ENCODE measurements at regions of chr10 and their contacts with region 1.

Region 1: GRCh38 chr10:88064608-88065382 is 201.4 kb downstream of the PTEN start:
- DNase-seq: peak in 7 of 9 donors; percentile 72 to 93 (median 87)
- ATAC-seq: peak; percentile 92
- H3K4me3 ChIP-seq: no peak overlapping the region
- H3K4me3 Mint-ChIP-seq: peak overlapping the region; percentile 14 to 77 (median 66)
- H3K27ac ChIP-seq: peak overlapping the region; percentile 67
- H3K27ac Mint-ChIP-seq: peak overlapping the region; percentile 26 to 99 (median 95)
- H3K4me1 ChIP-seq: peaks cover 6 to 77% of the 10 kb centered on the region in 2 donors
- H3K4me1 Mint-ChIP-seq: peaks cover 0 to 83% (median 65%) of the 10 kb centered on the region in 7 donors
- H3K27me3 ChIP-seq: no peaks in the 10 kb centered on the region
- H3K27me3 Mint-ChIP-seq: peaks cover 0 to 4% (median 0%) of the 10 kb centered on the region in 5 donors

Region 2: GRCh38 chr10:88027570-88027969 is 37.2 kb before region 1 on chr10:
- CTCF ChIA-PET with region 1: no interaction called
- POLR2A ChIA-PET with region 1: no interaction called
- intact Hi-C with region 1: loop called in 1 of 2 experiments (anchors 2 kb)
- DNase-seq: no peak
- ATAC-seq: peak; percentile 75
- H3K4me3 ChIP-seq: no peak overlapping the region
- H3K4me3 Mint-ChIP-seq: no peak overlapping the region
- H3K27ac ChIP-seq: no peak overlapping the region
- H3K27ac Mint-ChIP-seq: peak overlapping the region in 7 of 9 donors; percentile 12 to 90 (median 76)
- H3K4me1 ChIP-seq: peaks cover 11 to 15% of the 10 kb centered on the region in 2 donors
- H3K4me1 Mint-ChIP-seq: peaks cover 10 to 31% (median 18%) of the 10 kb centered on the region in 7 donors
- H3K27me3 ChIP-seq: no peaks in the 10 kb centered on the region
- H3K27me3 Mint-ChIP-seq: no peaks in the 10 kb centered on the region

Region 3: GRCh38 chr10:88080213-88080612 is 15.4 kb after region 1 on chr10:
- CTCF ChIA-PET with region 1: interaction called, 3 read pairs
- POLR2A ChIA-PET with region 1: interaction called, 3 read pairs
- intact Hi-C with region 1: loop called in 1 of 2 experiments (anchors 2 kb)
- DNase-seq: no peak
- ATAC-seq: no peak
- H3K4me3 ChIP-seq: no peak overlapping the region
- H3K4me3 Mint-ChIP-seq: no peak overlapping the region
- H3K27ac ChIP-seq: no peak overlapping the region
- H3K27ac Mint-ChIP-seq: no peak overlapping the region
- H3K4me1 ChIP-seq: no peaks in the 10 kb centered on the region
- H3K4me1 Mint-ChIP-seq: peaks cover 0 to 18% (median 7%) of the 10 kb centered on the region in 7 donors
- H3K27me3 ChIP-seq: no peaks in the 10 kb centered on the region
- H3K27me3 Mint-ChIP-seq: peaks cover 0 to 47% (median 0%) of the 10 kb centered on the region in 5 donors

Region 4: GRCh38 chr10:88114368-88114767 is 49.6 kb after region 1 on chr10:
- CTCF ChIA-PET with region 1: no interaction called
- POLR2A ChIA-PET with region 1: no interaction called
- intact Hi-C with region 1: loop called in 1 of 2 experiments (anchors 1 kb)
- DNase-seq: peak in 5 of 9 donors; percentile 11 to 48 (median 37)
- ATAC-seq: peak; percentile 74
- H3K4me3 ChIP-seq: no peak overlapping the region
- H3K4me3 Mint-ChIP-seq: peak overlapping the region in 5 of 10 donors; percentile 3 to 52 (median 32)
- H3K27ac ChIP-seq: no peak overlapping the region
- H3K27ac Mint-ChIP-seq: no peak overlapping the region
- H3K4me1 ChIP-seq: peaks cover 11 to 26% of the 10 kb centered on the region in 2 donors
- H3K4me1 Mint-ChIP-seq: peaks cover 4 to 32% (median 15%) of the 10 kb centered on the region in 7 donors
- H3K27me3 ChIP-seq: no peaks in the 10 kb centered on the region
- H3K27me3 Mint-ChIP-seq: peaks cover 0 to 12% (median 0%) of the 10 kb centered on the region in 5 donors

Region 5: GRCh38 chr10:88131511-88132154 is 66.8 kb after region 1 on chr10:
- CTCF ChIA-PET with region 1: no interaction called
- POLR2A ChIA-PET with region 1: no interaction called
- intact Hi-C with region 1: no loop called
- DNase-seq: no peak
- ATAC-seq: no peak
- H3K4me3 ChIP-seq: no peak overlapping the region
- H3K4me3 Mint-ChIP-seq: no peak overlapping the region
- H3K27ac ChIP-seq: no peak overlapping the region
- H3K27ac Mint-ChIP-seq: no peak overlapping the region
- H3K4me1 ChIP-seq: no peaks in the 10 kb centered on the region
- H3K4me1 Mint-ChIP-seq: peaks cover 0 to under 1% (median 0%) of the 10 kb centered on the region in 7 donors
- H3K27me3 ChIP-seq: no peaks in the 10 kb centered on the region
- H3K27me3 Mint-ChIP-seq: peaks cover 0 to 14% (median 0%) of the 10 kb centered on the region in 5 donors

Region 6: GRCh38 chr10:88194041-88194887 is 129.5 kb after region 1 on chr10:
- CTCF ChIA-PET with region 1: no interaction called
- POLR2A ChIA-PET with region 1: no interaction called
- intact Hi-C with region 1: loop called in 1 of 2 experiments (anchors 5 kb)
- DNase-seq: peak in 8 of 9 donors; percentile 24 to 83 (median 72)
- ATAC-seq: peak; percentile 98
- H3K4me3 ChIP-seq: peak overlapping the region; percentile 9
- H3K4me3 Mint-ChIP-seq: peak overlapping the region; percentile 61 to 80 (median 72)
- H3K27ac ChIP-seq: peak overlapping the region; percentile 53
- H3K27ac Mint-ChIP-seq: peak overlapping the region; percentile 72 to 94 (median 89)
- H3K4me1 ChIP-seq: peaks cover 32% of the 10 kb centered on the region in 2 donors
- H3K4me1 Mint-ChIP-seq: peaks cover 21 to 71% (median 52%) of the 10 kb centered on the region in 7 donors
- H3K27me3 ChIP-seq: no peaks in the 10 kb centered on the region
- H3K27me3 Mint-ChIP-seq: peaks cover 0 to 2% (median 0%) of the 10 kb centered on the region in 5 donors

Region 7: DNA sequence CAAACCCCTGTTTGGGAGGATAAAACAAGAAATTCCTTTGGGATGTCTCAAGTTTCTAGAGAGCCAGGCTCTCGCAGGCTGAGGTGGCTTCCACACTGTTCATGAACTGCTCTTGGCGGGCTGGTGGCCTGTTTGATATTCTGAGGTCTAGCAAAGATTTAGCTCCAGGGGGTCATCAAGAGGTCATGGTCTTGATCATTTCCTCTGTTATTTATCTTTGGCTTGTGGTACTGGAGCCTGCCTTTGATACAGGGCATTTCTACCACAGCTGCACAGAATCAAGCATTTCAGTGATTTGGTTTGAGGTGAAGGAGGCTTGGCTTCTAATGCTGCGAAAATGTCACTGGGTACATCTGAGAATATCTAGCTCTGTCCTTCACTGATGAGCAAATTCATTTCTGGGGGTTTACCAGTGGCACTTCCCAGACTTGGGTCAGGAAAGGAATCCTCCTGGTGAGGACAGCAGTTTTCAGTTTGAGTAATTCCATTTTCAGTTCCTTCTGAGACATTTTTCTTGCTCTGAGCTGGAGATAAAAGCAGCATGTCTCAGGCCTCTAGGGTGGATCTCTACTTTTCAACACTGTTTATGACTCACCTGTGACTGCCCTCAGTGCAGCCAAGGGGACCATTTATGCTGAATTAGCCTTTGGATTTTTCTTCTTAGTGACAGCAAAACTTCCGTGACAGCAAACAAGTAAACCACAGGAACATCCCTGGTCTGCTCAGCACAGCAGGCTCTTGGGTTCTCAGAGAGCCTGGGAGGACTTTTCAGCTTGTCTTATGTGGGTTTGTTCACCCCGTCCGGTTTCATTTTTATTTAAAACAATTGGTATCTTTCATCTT is 206.3 kb after region 1 on chr10:
- CTCF ChIA-PET with region 1: no interaction called
- POLR2A ChIA-PET with region 1: no interaction called
- intact Hi-C with region 1: loop called in 1 of 2 experiments (anchors 1 kb)
- DNase-seq: peak in 7 of 9 donors; percentile 8 to 54 (median 26)
- ATAC-seq: peak; percentile 79
- H3K4me3 ChIP-seq: peak overlapping the region; percentile 12
- H3K4me3 Mint-ChIP-seq: peak overlapping the region; percentile 29 to 78 (median 66)
- H3K27ac ChIP-seq: peak overlapping the region; percentile 33
- H3K27ac Mint-ChIP-seq: peak overlapping the region; percentile 44 to 89 (median 83)
- H3K4me1 ChIP-seq: peaks cover 13 to 18% of the 10 kb centered on the region in 2 donors
- H3K4me1 Mint-ChIP-seq: peaks cover 23 to 65% (median 38%) of the 10 kb centered on the region in 7 donors
- H3K27me3 ChIP-seq: no peaks in the 10 kb centered on the region
- H3K27me3 Mint-ChIP-seq: peaks cover 0 to 8% (median 0%) of the 10 kb centered on the region in 5 donors